SK-N-SH (cell line): ENCODE measurements at regions of chr5 and their contacts with region 1.

Region 1: DNA sequence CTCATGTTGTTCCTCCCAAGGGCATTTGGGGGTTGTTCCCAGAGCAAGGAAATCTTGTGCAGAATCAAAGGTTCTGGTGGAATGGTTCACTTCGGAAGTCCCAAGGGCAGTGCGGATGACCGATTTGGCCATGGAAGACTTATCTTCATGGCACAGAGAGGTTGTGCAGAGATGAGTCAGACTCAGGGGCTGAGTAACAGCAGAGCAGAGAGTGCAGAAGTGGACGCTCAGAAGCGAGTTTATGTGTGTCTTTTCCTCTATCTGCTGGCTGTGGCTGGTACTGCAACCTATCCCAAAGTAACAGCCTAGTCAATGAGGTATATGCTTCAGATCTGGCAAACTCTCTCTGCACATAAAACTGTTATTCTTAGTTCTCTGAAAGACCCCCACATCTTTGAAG is 118.1 kb downstream of the DPYSL3 start:
- DNase-seq: peak; percentile 60
- H3K4me3 ChIP-seq: no peak overlapping the region; a peak in 1 of 4 replicates
- H3K27ac ChIP-seq: no peak overlapping the region; a peak in 1 of 4 replicates
- H3K4me1 ChIP-seq: peaks cover 0 to 33% of the 10 kb centered on the region in 2 experiments; a peak in 2 of 4 replicates
- H3K27me3 ChIP-seq: no peaks in the 10 kb centered on the region
- CTCF ChIP-seq: peak; percentile 59
- EP300 ChIP-seq: no peak
- RAD21 ChIP-seq: peak; percentile 76

Region 2: DNA sequence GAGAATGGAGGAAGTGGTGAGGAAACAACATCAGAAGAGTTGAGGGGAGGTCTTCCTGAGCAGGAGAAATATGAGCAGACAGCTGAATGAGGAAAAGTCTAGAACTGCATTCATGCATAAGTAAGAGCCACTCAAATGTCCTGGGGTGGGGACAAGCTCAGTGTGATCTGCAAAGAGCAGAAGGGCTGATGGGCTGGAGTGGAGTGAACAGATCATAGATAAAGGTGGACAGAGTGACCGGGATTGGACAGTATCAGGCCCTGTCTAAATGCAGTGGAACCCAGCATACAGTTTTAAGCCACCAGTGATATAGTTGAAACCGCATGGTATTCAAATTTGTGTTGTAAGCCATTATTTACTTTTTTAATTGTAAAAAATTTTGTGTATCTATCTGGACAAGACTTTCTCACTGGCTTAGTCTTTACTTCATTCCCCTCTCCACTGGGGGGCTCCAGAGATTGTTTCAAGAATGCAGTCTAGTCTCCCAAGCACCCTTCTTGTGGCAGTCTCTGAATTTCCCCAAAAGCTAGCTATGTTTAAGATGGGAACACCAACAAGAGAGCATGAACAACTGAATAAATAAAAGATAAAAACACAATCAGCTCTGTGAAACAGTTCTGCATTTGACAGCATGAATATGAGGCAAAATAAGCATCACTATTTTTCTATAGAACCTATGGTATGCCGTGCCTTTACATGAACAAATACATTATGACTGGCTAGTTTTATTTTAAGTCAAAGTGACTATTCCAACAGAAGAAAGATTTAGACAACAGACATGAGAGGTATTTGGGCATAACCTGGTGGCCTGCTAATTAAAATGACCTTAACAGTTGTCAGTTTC is 167.6 kb before region 1 on chr5:
- CTCF ChIA-PET with region 1: interaction called, 12 read pairs
- POLR2A ChIA-PET with region 1: no interaction called
- DNase-seq: peak; percentile 69
- H3K4me3 ChIP-seq: no peak overlapping the region
- H3K27ac ChIP-seq: no peak overlapping the region
- H3K4me1 ChIP-seq: no peaks in the 10 kb centered on the region; a peak in 2 of 4 replicates
- H3K27me3 ChIP-seq: no peaks in the 10 kb centered on the region
- CTCF ChIP-seq: peak; percentile 84
- EP300 ChIP-seq: no peak
- RAD21 ChIP-seq: peak; percentile 84

Region 3: GRCh38 chr5:147403651-147404640 is 12.2 kb after region 1 on chr5:
- CTCF ChIA-PET with region 1: interaction called, 23 read pairs
- POLR2A ChIA-PET with region 1: no interaction called
- DNase-seq: no peak
- H3K4me3 ChIP-seq: peak overlapping the region in 1 of 2 experiments; percentile 32; a peak in 2 of 4 replicates
- H3K27ac ChIP-seq: peak overlapping the region; percentile 60 to 99
- H3K4me1 ChIP-seq: peaks cover 22 to 31% of the 10 kb centered on the region in 2 experiments
- H3K27me3 ChIP-seq: no peaks in the 10 kb centered on the region
- CTCF ChIP-seq: no peak
- EP300 ChIP-seq: peak in 1 of 2 experiments; percentile 61; a peak in 1 of 4 replicates
- RAD21 ChIP-seq: no peak

Region 4: GRCh38 chr5:147410496-147411355 is 18.9 kb after region 1 on chr5:
- CTCF ChIA-PET with region 1: interaction called, 21 read pairs
- POLR2A ChIA-PET with region 1: no interaction called
- DNase-seq: peak; percentile 40
- H3K4me3 ChIP-seq: no peak overlapping the region
- H3K27ac ChIP-seq: peak overlapping the region; percentile 34 to 81; a peak in 3 of 4 replicates
- H3K4me1 ChIP-seq: peaks cover 10 to 27% of the 10 kb centered on the region in 2 experiments; a peak in 3 of 4 replicates
- H3K27me3 ChIP-seq: no peaks in the 10 kb centered on the region
- CTCF ChIP-seq: no peak
- EP300 ChIP-seq: peak in 1 of 2 experiments; percentile 57; a peak in 1 of 4 replicates
- RAD21 ChIP-seq: no peak

Region 5: GRCh38 chr5:147690595-147690994 is 298.8 kb after region 1 on chr5:
- CTCF ChIA-PET with region 1: no interaction called
- POLR2A ChIA-PET with region 1: no interaction called
- DNase-seq: no peak
- H3K4me3 ChIP-seq: no peak overlapping the region
- H3K27ac ChIP-seq: no peak overlapping the region
- H3K4me1 ChIP-seq: peaks cover 10 to 21% of the 10 kb centered on the region in 2 experiments; a peak in 3 of 4 replicates
- H3K27me3 ChIP-seq: no peaks in the 10 kb centered on the region
- CTCF ChIP-seq: peak; percentile 11; the same call in 1 of the 2 replicates
- EP300 ChIP-seq: no peak
- RAD21 ChIP-seq: peak; percentile 13; the same call in 1 of the 2 replicates